Naive thymus-derived CD4-positive, alpha-beta T cell (primary cell): ENCODE measurements at regions of chr17 and their contacts with region 1.

Region 1: GRCh38 chr17:66255112-66255511 is 25.9 kb upstream of the APOH start:
- DNase-seq: peak in 7 of 9 donors; percentile 60 to 80 (median 73)
- ATAC-seq: peak; percentile 92
- H3K4me3 ChIP-seq: peak overlapping the region; percentile 1
- H3K4me3 Mint-ChIP-seq: peak overlapping the region; percentile 30 to 80 (median 65)
- H3K27ac ChIP-seq: peak overlapping the region; percentile 52
- H3K27ac Mint-ChIP-seq: peak overlapping the region; percentile 44 to 93 (median 89)
- H3K4me1 ChIP-seq: peaks cover 5 to 17% of the 10 kb centered on the region in 2 donors
- H3K4me1 Mint-ChIP-seq: peaks cover 8 to 34% (median 24%) of the 10 kb centered on the region in 7 donors
- H3K27me3 ChIP-seq: no peaks in the 10 kb centered on the region
- H3K27me3 Mint-ChIP-seq: no peaks in the 10 kb centered on the region

Region 2: DNA sequence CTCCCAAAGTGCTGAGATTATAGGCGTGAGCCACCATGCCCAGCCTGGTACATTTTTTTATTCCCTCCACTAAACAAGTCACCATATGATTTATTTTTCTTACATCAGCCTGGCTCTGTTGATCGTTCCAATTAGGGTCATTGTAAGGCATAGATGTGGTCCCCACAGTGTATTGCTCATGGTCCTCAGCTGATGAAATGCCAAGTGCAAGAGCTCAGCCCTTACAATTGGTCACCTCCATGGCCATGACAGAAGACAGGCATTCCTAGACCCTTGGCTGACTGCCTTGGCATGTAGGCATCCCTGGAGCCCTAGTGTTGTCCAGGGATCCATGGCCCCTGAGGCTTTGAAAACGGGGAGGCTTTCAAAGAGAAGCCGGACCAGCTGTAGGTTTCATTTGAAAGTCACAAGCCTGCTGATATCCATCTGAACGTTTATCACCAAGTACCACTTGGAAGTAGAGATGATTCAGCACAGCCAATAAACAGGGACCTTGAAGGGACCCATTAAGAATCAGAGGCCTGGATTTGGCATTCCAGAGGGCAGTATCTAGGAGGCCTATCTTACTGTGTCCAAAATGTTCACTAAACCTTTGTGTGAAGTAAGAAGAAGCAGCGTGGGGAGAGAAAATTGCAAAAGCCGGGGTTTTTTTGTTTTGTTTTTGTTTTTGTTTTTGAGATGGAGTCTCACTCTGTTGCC is 26.7 kb after region 1 on chr17:
- CTCF ChIA-PET with region 1: interaction called, 5 read pairs
- POLR2A ChIA-PET with region 1: interaction called, 3 read pairs
- intact Hi-C with region 1: loop called in 1 of 2 experiments (anchors 1 kb)
- DNase-seq: no peak
- ATAC-seq: no peak
- H3K4me3 ChIP-seq: no peak overlapping the region
- H3K4me3 Mint-ChIP-seq: no peak overlapping the region
- H3K27ac ChIP-seq: no peak overlapping the region
- H3K27ac Mint-ChIP-seq: peak overlapping the region in 5 of 9 donors; percentile 61 to 93 (median 67)
- H3K4me1 ChIP-seq: peaks cover 9 to 20% of the 10 kb centered on the region in 2 donors
- H3K4me1 Mint-ChIP-seq: peaks cover 17 to 44% (median 25%) of the 10 kb centered on the region in 7 donors
- H3K27me3 ChIP-seq: no peaks in the 10 kb centered on the region
- H3K27me3 Mint-ChIP-seq: peaks cover 0 to 10% (median 0%) of the 10 kb centered on the region in 5 donors

Region 3: DNA sequence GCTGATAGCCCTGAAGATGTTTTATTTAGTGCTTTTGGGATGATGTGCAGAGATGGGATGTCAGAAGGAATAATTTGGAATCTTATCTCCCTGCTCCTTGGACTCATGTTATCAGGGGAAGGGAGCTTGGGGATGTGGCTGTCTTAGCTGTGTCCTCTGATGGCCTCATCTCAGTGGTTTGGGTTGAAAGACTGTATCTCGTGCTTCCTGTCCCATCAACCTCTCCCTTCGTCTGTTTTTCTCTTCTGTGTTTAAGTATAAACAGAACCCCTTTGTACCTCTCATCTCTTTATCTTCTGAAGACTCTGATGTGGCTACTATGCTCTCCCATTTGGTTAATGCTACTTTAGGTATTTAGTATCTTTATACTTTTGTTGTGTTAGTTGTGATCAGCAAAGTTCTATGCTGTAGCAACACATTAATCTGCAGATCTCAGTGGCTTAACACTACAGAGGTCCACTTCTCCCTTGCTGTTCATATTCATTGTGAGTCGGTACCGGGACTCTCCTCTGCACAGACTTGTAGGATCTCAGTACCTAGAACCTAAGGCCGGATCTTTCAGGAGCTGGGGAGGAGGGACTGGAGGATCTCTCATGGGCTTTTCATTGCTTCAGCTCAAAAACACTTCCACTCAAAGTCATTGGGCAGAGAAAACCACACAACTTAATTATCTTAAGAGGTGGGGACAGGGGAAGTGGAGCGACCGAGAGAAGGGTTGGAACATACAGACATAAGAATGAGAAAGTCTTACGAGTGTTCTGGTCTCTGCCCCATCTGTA is 76.1 kb after region 1 on chr17:
- CTCF ChIA-PET with region 1: no interaction called
- POLR2A ChIA-PET with region 1: interaction called, 5 read pairs
- intact Hi-C with region 1: loop called in 1 of 2 experiments (anchors 2 kb)
- DNase-seq: peak in 8 of 9 donors; percentile 32 to 88 (median 76)
- ATAC-seq: peak; percentile 91
- H3K4me3 ChIP-seq: peak overlapping the region; percentile 6
- H3K4me3 Mint-ChIP-seq: peak overlapping the region; percentile 68 to 92 (median 83)
- H3K27ac ChIP-seq: peak overlapping the region; percentile 69
- H3K27ac Mint-ChIP-seq: peak overlapping the region; percentile 88 to 99 (median 95)
- H3K4me1 ChIP-seq: peaks cover 0 to 91% of the 10 kb centered on the region in 2 donors
- H3K4me1 Mint-ChIP-seq: peaks cover 43 to 92% (median 81%) of the 10 kb centered on the region in 7 donors
- H3K27me3 ChIP-seq: no peaks in the 10 kb centered on the region
- H3K27me3 Mint-ChIP-seq: no peaks in the 10 kb centered on the region

Region 4: DNA sequence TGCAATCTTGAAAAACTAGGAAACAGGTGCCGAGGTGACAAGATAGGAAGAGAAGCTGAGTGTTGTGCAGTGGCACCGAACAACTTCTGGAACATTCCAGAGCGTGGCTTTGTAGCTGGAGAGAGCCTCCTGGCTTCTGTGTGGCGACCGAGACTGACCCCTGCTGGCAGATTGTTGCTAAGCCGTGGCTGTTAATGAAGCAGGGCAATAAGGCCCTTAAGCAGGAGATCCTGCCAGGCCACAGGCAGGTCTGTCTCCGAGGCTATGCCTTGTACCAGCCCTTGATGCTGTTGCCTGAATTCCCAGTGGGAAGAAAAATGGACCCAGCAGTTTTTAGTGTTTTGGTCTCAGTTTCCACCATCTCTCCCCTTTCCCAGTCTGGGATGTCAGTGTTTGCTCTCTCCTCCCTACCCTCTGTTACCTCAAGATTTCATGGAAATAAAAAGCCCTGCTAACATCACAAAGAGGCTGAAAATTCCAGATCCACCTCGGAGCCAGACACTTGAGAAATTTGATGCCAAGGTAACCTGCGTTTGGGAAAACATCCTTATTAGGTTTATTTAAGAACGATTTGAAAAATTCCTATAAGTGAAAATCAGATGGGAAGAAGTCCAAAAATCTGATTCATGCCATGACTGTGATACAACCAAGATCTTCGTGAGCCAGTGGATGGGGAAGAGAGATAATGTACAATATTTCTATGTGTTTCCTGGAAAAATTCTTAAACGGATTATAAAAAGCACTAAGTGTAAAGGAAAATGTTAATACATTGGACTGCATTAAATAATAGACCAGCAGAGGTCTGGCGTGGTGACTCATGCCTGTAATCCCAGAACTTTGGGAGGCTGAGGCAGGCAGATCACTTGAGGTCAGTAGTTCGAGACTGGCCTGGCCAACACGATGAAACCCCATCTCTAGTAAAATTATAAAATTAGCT is 312.4 kb after region 1 on chr17:
- CTCF ChIA-PET with region 1: interaction called, 20 read pairs
- POLR2A ChIA-PET with region 1: interaction called, 3 read pairs
- intact Hi-C with region 1: loop called (anchors 1 kb)
- DNase-seq: peak; percentile 30 to 76 (median 65)
- ATAC-seq: peak; percentile 87
- H3K4me3 ChIP-seq: no peak overlapping the region
- H3K4me3 Mint-ChIP-seq: no peak overlapping the region
- H3K27ac ChIP-seq: no peak overlapping the region
- H3K27ac Mint-ChIP-seq: peak overlapping the region in 7 of 9 donors; percentile 3 to 87 (median 23)
- H3K4me1 ChIP-seq: peaks cover 0 to 14% of the 10 kb centered on the region in 2 donors
- H3K4me1 Mint-ChIP-seq: peaks cover 17 to 56% (median 51%) of the 10 kb centered on the region in 7 donors
- H3K27me3 ChIP-seq: no peaks in the 10 kb centered on the region
- H3K27me3 Mint-ChIP-seq: no peaks in the 10 kb centered on the region

Region 5: GRCh38 chr17:66633317-66633965 is 378.3 kb after region 1 on chr17:
- CTCF ChIA-PET with region 1: no interaction called
- POLR2A ChIA-PET with region 1: interaction called, 3 read pairs
- intact Hi-C with region 1: loop called in 1 of 2 experiments (anchors 5 kb)
- DNase-seq: peak in 7 of 9 donors; percentile 10 to 51 (median 31)
- ATAC-seq: peak; percentile 81
- H3K4me3 ChIP-seq: no peak overlapping the region
- H3K4me3 Mint-ChIP-seq: peak overlapping the region in 6 of 10 donors; percentile 1 to 41 (median 24)
- H3K27ac ChIP-seq: no peak overlapping the region
- H3K27ac Mint-ChIP-seq: peak overlapping the region in 8 of 9 donors; percentile 3 to 84 (median 72)
- H3K4me1 ChIP-seq: peaks cover 0 to 11% of the 10 kb centered on the region in 2 donors
- H3K4me1 Mint-ChIP-seq: peaks cover 30 to 81% (median 70%) of the 10 kb centered on the region in 7 donors
- H3K27me3 ChIP-seq: no peaks in the 10 kb centered on the region
- H3K27me3 Mint-ChIP-seq: no peaks in the 10 kb centered on the region

Region 6: DNA sequence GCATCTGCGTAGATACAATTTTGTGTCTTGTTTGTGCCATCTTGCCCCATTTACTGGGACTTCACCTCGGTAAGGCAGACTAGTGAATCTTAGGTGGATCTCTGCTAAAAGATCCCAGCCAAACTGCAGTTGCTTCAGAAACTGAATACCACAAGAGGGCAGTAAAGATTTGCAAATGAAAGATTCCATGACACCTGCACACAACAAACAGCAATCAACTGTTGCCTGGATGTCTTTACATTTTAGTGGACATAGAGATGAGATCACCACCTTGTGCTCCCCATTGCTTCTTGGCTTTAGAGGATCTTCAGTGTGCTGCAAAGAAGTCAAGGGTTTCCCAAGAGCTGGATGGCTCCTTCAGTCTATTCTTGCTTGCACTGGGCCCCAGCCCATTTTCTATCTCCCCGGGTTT is 460.6 kb after region 1 on chr17:
- CTCF ChIA-PET with region 1: no interaction called
- POLR2A ChIA-PET with region 1: no interaction called
- intact Hi-C with region 1: loop called in 1 of 2 experiments (anchors 1 kb)
- DNase-seq: peak in 7 of 9 donors; percentile 13 to 51 (median 41)
- ATAC-seq: peak; percentile 62
- H3K4me3 ChIP-seq: no peak overlapping the region
- H3K4me3 Mint-ChIP-seq: no peak overlapping the region
- H3K27ac ChIP-seq: no peak overlapping the region
- H3K27ac Mint-ChIP-seq: peak overlapping the region in 3 of 9 donors; percentile 46 to 83 (median 65)
- H3K4me1 ChIP-seq: peaks cover 10 to 29% of the 10 kb centered on the region in 2 donors
- H3K4me1 Mint-ChIP-seq: peaks cover 12 to 49% (median 33%) of the 10 kb centered on the region in 7 donors
- H3K27me3 ChIP-seq: no peaks in the 10 kb centered on the region
- H3K27me3 Mint-ChIP-seq: no peaks in the 10 kb centered on the region